ENCODE measurements at regions of chr11 and their contacts with region 1.

Region 1: DNA sequence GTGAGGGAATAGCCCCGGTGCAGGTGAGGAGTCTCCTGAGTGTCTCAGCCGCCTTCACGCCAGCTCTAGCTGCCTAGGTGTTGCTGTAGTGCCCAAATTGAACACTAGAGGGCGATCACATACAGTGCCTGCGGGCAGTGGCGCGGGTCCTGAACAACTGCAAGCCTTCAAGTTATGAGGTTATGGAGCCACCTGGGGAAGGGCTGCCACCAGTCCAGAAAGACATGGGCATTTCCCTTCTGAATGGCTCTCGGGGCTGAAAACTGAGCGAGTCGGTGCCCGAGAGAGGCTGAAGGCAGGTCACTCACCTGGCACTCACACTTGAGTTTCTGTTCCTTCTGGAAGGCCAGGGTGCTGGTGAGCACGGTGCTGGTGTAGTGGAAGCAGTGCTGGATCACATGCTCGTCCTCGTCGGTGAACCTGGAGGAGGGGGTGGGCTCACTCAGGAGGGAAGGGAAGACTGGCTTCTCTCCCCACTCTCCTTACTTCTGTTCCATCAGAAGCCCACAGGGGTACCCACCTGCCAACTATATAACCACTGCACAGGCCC is 88.4 kb downstream of the PDE2A start:
- DNase-seq: peak in 1 of 2 experiments; percentile 82
- H3K4me3 ChIP-seq: no peak overlapping the region
- H3K27ac ChIP-seq: no peak overlapping the region
- H3K4me1 ChIP-seq: peaks cover 0 to 7% (median 3%) of the 10 kb centered on the region in 4 experiments; a peak in 4 of 7 replicates
- H3K27me3 ChIP-seq: peaks cover 24 to 73% (median 57%) of the 10 kb centered on the region in 4 experiments
- CTCF ChIP-seq: peak; percentile 84 to 94 (median 90)
- EP300 ChIP-seq: no peak
- POLR2A ChIP-seq: no peak
- RAD21 ChIP-seq: peak; percentile 87 to 89

Region 2: DNA sequence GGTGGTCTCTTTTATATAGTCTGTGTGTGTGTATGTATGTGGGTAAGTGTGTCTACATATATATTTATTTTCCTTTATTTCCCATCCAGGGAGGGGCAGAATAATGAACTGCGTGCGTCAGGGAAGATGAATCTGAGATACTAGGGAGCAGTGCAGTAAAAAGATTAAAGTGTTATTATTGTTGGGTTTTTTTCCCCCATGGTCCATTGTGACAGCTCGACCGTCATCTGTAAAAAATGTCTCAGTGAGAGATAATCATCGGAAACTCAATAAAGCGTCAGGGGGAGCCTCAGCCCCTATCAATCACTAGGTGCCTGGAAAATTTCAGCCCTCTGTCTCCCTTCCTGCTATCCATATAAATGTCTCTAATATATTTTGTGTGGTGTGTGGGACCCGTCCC is 216.1 kb before region 1 on chr11:
- CTCF ChIA-PET with region 1: no interaction called
- POLR2A ChIA-PET with region 1: no interaction called
- DNase-seq: no peak
- H3K4me3 ChIP-seq: no peak overlapping the region
- H3K27ac ChIP-seq: no peak overlapping the region
- H3K4me1 ChIP-seq: no peaks in the 10 kb centered on the region; a peak in 1 of 7 replicates
- H3K27me3 ChIP-seq: no peaks in the 10 kb centered on the region
- CTCF ChIP-seq: no peak
- EP300 ChIP-seq: no peak
- POLR2A ChIP-seq: no peak
- RAD21 ChIP-seq: no peak

Region 3: GRCh38 chr11:72483412-72484186 is 102.2 kb before region 1 on chr11:
- CTCF ChIA-PET with region 1: interaction called, 12 read pairs
- POLR2A ChIA-PET with region 1: no interaction called
- DNase-seq: no peak
- H3K4me3 ChIP-seq: no peak overlapping the region
- H3K27ac ChIP-seq: no peak overlapping the region
- H3K4me1 ChIP-seq: no peaks in the 10 kb centered on the region
- H3K27me3 ChIP-seq: no peaks in the 10 kb centered on the region
- CTCF ChIP-seq: no peak
- EP300 ChIP-seq: no peak
- POLR2A ChIP-seq: no peak
- RAD21 ChIP-seq: no peak

Region 4: DNA sequence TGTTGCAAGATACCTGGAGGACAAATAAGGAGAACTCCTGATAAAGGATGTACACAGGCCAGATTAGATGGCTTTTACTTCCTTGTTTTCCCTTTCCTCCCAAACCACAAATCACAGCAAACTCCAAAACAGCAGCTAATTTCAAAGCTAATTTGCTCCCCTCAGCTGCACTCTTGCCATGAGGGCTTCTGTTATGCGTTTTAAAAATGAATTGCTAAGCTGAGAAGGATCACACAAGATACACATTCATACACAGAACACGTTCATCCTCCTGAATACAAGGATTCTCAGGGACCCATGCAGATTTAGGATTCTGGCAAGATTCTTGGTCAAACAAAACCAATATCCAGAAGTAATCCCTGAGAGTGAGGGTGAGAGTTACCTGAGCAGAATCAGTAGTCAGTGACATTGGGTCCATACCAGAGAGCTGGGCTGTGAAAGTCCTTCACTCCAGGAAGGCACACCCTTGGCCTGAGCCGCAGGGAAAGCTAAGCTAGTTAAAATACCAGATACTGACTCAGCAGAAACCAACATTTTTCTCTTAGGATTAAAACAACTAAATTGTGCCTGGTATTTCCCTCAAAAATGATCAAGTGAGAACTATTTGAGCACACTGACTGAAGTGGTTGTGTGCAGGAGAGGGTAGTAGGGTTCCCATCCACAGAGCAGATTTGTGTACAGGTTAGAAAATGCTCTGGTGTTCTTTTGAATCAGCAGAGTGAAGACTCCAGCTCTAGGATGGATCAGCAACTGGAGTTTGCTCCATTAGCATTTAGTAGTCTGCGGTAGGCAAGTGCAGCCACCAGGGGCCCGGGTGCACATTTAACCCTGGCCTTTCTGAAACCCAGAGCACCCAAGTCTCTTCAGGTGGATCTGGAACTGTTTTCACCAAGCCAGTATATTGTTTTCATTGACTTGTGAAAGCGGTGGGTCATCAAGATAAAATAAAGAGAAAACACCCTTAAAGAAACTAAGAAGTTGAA is 51.0 kb before region 1 on chr11:
- CTCF ChIA-PET with region 1: no interaction called
- POLR2A ChIA-PET with region 1: no interaction called
- DNase-seq: no peak
- H3K4me3 ChIP-seq: no peak overlapping the region
- H3K27ac ChIP-seq: no peak overlapping the region
- H3K4me1 ChIP-seq: peaks cover 4 to 9% (median 8%) of the 10 kb centered on the region in 4 experiments; a peak in 6 of 7 replicates
- H3K27me3 ChIP-seq: no peaks in the 10 kb centered on the region; a peak in 1 of 7 replicates
- CTCF ChIP-seq: peak; percentile 42 to 54 (median 45)
- EP300 ChIP-seq: no peak
- POLR2A ChIP-seq: no peak
- RAD21 ChIP-seq: peak in 1 of 2 experiments; percentile 30; a peak in 1 of 4 replicates

Region 5: GRCh38 chr11:72598906-72599305 is 13.1 kb after region 1 on chr11:
- CTCF ChIA-PET with region 1: interaction called, 145 read pairs
- POLR2A ChIA-PET with region 1: interaction called, 3 read pairs
- DNase-seq: peak in 1 of 2 experiments; percentile 70
- H3K4me3 ChIP-seq: no peak overlapping the region
- H3K27ac ChIP-seq: no peak overlapping the region
- H3K4me1 ChIP-seq: peaks cover 5 to 26% (median 20%) of the 10 kb centered on the region in 4 experiments
- H3K27me3 ChIP-seq: peaks cover 0 to 14% (median 3%) of the 10 kb centered on the region in 4 experiments; a peak in 4 of 7 replicates
- CTCF ChIP-seq: peak; percentile 82 to 86 (median 83)
- EP300 ChIP-seq: no peak
- POLR2A ChIP-seq: no peak
- RAD21 ChIP-seq: peak; percentile 68 to 78

Region 6: GRCh38 chr11:72642884-72643511 is 57.2 kb after region 1 on chr11:
- CTCF ChIA-PET with region 1: interaction called, 552 read pairs
- POLR2A ChIA-PET with region 1: no interaction called
- DNase-seq: peak; percentile 19 to 92
- H3K4me3 ChIP-seq: peak overlapping the region; percentile 14 to 59 (median 30); a peak in 5 of 8 replicates
- H3K27ac ChIP-seq: no peak overlapping the region
- H3K4me1 ChIP-seq: peaks cover 0 to 2% (median 0%) of the 10 kb centered on the region in 4 experiments; a peak in 1 of 7 replicates
- H3K27me3 ChIP-seq: peaks cover 16 to 49% (median 37%) of the 10 kb centered on the region in 4 experiments
- CTCF ChIP-seq: peak; percentile 84 to 96 (median 94)
- EP300 ChIP-seq: no peak
- POLR2A ChIP-seq: no peak
- RAD21 ChIP-seq: peak; percentile 83 to 88